HCT116 (cell line): ENCODE measurements at regions of chr15 and their contacts with region 1.

Region 1: DNA sequence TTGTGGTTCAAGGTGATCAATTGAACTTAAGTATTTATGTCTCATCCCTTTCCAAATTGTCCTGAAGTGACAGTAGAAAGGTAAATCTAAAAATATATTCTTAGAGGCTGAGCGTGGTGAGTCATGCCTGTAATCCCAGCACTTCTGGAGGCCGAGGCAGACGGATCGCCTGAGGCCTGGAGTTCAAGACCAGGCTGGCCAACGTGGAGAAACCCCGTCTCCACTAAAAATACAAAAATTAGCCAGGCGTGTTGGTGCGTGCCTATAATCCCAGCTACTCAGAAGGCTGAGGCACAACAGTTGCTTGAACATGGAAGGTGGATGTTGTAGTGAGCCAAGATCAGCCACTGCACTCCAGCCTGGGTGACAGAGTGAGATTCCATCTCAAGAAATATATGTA is 226.6 kb downstream of the DPH6 start:
- DNase-seq: no peak
- ATAC-seq: no peak
- H3K4me3 ChIP-seq: no peak overlapping the region
- H3K27ac ChIP-seq: no peak overlapping the region
- H3K4me1 ChIP-seq: peaks cover 4 to 6% of the 10 kb centered on the region in 2 experiments; a peak in 3 of 4 replicates
- H3K27me3 ChIP-seq: no peaks in the 10 kb centered on the region
- CTCF ChIP-seq: no peak
- POLR2A ChIP-seq: no peak
- RAD21 ChIP-seq: no peak

Region 2: GRCh38 chr15:35349916-35350315 is 30.6 kb after region 1 on chr15:
- CTCF ChIA-PET with region 1: no interaction called
- POLR2A ChIA-PET with region 1: no interaction called
- RAD21 ChIA-PET with region 1: no interaction called
- intact Hi-C with region 1: no loop called
- DNase-seq: no peak
- ATAC-seq: no peak
- H3K4me3 ChIP-seq: no peak overlapping the region
- H3K27ac ChIP-seq: no peak overlapping the region
- H3K4me1 ChIP-seq: no peaks in the 10 kb centered on the region; a peak in 1 of 4 replicates
- H3K27me3 ChIP-seq: no peaks in the 10 kb centered on the region
- CTCF ChIP-seq: no peak
- POLR2A ChIP-seq: no peak
- RAD21 ChIP-seq: no peak

Region 3: GRCh38 chr15:35362195-35362829 is 43.0 kb after region 1 on chr15:
- CTCF ChIA-PET with region 1: no interaction called
- POLR2A ChIA-PET with region 1: no interaction called
- RAD21 ChIA-PET with region 1: no interaction called
- intact Hi-C with region 1: loop called (anchors 5 kb)
- DNase-seq: no peak
- ATAC-seq: no peak
- H3K4me3 ChIP-seq: no peak overlapping the region
- H3K27ac ChIP-seq: no peak overlapping the region
- H3K4me1 ChIP-seq: peaks cover 0 to 5% of the 10 kb centered on the region in 2 experiments; a peak in 1 of 4 replicates
- H3K27me3 ChIP-seq: no peaks in the 10 kb centered on the region
- CTCF ChIP-seq: no peak
- POLR2A ChIP-seq: no peak
- RAD21 ChIP-seq: no peak